Activated T-helper 2 cell treated with anti-CD3 and anti-CD28 coated beads, Interferon-gamma antibody, Interleukin-2, Interleukin-4, amounts not matched to agents 10 μg/mL and 5 μg/mL and 100 μg/mL, durations not matched to agents 14 hours and 24 hours and 36 hours (primary cell): ENCODE measurements at regions of chr4 and their contacts with region 1.

Region 1: DNA sequence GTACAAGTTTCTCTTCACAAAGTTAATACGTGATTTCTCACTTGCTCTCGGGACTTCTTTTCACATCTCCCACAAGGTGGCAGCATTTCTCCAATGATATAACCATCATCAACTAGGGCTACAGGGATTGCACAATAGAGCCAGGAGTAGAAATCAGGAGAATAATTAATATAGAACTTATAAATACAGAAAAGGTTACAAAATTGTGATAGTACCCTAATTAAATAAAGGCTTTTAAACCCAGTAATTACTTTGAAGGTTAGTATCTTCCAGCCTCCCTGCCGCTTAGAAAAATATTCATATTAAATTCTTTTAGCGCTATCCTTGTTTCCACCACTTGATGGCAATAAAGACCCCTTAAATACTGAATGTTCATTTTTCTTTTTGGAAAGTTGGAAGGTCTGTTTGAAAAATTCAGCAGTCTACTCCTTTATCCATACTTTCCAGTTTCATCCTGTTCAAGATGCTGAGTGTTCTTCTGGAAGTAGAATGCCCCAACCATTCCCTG is 65.8 kb downstream of the RASGEF1B start:
- DNase-seq: no peak
- H3K4me3 Mint-ChIP-seq: no peak overlapping the region
- H3K27ac Mint-ChIP-seq: no peak overlapping the region
- H3K4me1 Mint-ChIP-seq: peaks cover 3% of the 10 kb centered on the region
- H3K27me3 Mint-ChIP-seq: peaks cover 2% of the 10 kb centered on the region

Region 2: DNA sequence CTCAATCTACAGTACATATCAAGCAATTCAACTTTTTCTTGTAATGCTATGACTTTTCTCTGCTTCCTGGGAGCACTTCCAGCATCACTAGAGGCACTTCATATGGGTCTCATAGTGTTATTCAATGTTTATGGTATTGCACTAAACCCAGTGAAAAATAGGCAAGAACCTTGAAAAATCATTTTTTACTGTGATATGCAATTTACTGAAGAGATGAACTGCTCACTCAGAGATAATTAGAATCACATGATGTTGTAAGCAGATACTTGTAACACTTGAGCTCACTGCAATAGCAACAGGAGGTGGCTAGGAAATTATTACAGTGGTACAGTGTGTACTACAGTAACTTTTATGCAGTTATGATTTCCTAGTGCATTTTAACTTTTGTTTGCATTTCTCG is 27.6 kb before region 1 on chr4:
- intact Hi-C with region 1: no loop called
- DNase-seq: no peak
- H3K4me3 Mint-ChIP-seq: no peak overlapping the region
- H3K27ac Mint-ChIP-seq: no peak overlapping the region
- H3K4me1 Mint-ChIP-seq: no peaks in the 10 kb centered on the region
- H3K27me3 Mint-ChIP-seq: peaks cover 3% of the 10 kb centered on the region

Region 3: DNA sequence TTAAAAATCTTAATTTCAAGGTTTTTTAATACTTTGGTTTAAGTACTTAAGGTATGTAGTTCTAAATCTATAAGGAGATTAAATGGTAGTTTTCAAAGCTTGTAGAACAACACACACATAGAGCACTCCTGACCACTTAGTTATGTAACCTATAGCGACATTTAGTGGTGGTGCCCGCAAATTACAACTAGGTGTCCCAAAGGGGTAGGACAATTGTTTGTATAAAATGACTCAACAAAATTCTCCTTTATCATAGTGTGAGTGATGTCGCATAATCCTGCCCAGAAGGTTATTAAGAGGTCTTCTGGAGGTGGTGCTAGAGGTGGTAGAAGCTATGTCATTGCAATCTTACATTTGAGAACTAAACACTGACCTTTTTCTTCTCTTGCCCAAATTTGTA is 438.8 kb after region 1 on chr4:
- intact Hi-C with region 1: loop called (anchors 1 kb)
- DNase-seq: peak; percentile 44
- H3K4me3 Mint-ChIP-seq: no peak overlapping the region
- H3K27ac Mint-ChIP-seq: no peak overlapping the region
- H3K4me1 Mint-ChIP-seq: peaks cover 3% of the 10 kb centered on the region
- H3K27me3 Mint-ChIP-seq: peaks cover 4% of the 10 kb centered on the region

Region 4: DNA sequence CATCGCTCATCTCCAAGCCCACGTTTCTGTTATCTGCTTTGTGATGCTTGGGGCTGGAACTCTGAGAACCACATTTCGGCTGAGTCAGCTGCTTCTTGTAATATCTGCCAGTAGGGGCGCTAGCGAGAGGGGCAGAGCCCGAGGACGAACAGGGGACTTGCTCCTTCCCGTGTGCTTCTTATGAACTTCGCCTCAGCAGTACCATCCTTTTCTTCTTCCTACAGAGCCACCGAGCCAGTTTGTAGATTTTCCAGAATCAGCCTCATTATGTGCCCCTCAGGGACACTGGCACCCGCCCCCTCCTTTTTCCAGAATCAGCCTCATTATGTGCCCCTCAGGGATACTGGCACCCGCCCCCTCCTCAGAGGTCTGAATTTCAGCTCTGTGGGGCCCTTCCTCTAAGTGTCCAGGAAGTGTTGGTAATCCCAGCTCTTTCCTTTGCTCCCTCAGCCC is 507.5 kb after region 1 on chr4:
- intact Hi-C with region 1: loop called (anchors 10 kb)
- DNase-seq: peak; percentile 17
- H3K4me3 Mint-ChIP-seq: no peak overlapping the region
- H3K27ac Mint-ChIP-seq: no peak overlapping the region
- H3K4me1 Mint-ChIP-seq: peaks cover 4% of the 10 kb centered on the region
- H3K27me3 Mint-ChIP-seq: peaks cover 25% of the 10 kb centered on the region

Region 5: DNA sequence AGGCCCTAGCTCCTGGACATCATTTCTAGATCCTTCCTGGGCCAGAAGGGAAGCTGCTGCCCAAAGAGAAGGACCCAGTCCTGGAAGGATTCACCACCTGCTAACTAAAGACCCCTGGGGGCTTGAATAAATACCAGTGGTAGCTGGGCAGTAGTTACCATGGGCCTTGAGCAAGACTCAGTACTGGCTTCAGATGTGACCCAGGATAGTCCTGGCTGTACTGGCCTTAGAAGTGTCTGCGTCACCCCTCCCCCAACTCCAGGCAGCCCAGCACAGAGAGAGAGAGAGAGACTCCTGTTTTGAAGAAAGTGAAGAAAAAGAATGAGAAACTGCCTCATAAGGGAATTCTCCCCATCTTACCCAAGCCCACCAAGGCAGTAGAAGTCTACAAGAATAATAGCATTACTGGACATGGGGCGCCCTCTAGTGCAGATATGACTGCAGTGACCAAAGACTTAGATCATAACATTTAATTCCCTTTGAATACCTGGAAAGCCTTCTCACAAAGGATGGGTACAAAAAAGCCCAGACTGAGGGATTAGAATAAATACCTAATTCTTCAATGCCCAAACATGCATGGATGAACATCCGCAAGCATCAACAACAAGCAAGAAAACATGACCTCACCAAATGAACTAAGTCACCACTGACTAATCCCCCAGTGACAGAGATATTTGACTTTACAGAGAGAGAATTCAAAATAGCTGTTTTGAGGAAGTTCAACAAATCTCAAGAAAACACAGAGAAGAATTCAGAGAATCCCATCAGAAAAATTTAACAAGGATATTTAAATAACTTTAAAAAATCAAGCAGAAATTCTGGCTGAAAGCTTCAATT is 796.1 kb after region 1 on chr4:
- intact Hi-C with region 1: loop called (anchors 1 kb)
- DNase-seq: no peak
- H3K4me3 Mint-ChIP-seq: no peak overlapping the region
- H3K27ac Mint-ChIP-seq: no peak overlapping the region
- H3K4me1 Mint-ChIP-seq: peaks cover 3% of the 10 kb centered on the region
- H3K27me3 Mint-ChIP-seq: peaks cover 25% of the 10 kb centered on the region

Region 6: GRCh38 chr4:82268050-82268825 is 862.3 kb after region 1 on chr4:
- intact Hi-C with region 1: loop called (anchors 1 kb)
- DNase-seq: no peak
- H3K4me3 Mint-ChIP-seq: no peak overlapping the region
- H3K27ac Mint-ChIP-seq: no peak overlapping the region
- H3K4me1 Mint-ChIP-seq: peaks cover 8% of the 10 kb centered on the region
- H3K27me3 Mint-ChIP-seq: peaks cover 5% of the 10 kb centered on the region

Region 7: DNA sequence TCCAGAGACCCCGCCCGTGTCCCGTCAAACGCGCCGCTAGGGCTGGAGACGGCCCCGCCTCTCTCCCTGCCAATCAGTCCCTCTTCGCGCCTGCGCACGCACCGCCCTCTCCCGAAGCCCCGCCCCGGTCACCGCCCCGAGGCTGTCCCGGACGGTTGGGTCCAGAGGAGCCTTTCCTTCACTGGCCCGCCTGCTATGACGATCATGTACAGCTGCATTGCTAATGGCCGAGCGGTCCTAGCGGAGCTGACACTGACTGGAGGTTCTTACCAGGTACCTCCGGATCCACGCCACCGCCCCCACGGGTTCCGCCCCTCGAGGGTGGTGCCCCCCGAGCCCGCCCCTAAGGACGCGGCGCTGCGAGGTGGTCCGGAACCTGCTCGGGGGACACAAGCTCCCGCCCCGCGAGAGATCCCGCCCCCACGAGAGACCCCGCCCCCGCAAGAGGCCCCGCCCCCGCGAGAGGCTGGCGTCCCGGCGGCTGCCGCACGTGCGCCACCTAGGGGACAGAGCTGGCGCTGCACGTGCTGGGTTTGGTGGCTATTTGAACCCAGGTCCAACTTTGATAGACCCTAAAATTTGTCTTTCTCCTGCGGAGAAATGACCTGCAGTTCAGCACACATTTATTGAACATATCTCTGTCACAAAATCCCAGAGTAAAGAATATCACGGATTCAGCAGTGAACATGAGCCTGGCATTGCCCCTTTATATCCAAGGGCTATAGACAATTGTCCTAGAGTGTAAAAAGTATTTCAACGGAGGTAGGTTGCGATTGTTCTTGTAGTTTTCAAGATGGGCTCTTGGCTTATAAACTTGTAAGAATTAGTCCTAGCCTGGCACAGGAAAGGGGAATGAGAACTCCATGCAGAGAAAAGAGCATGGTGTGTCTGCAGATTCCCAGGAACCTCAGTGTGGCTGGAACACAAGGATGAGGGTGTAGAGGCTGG is 879.2 kb after region 1 on chr4:
- intact Hi-C with region 1: loop called (anchors 5 kb)
- DNase-seq: peak; percentile 99
- H3K4me3 Mint-ChIP-seq: peak overlapping the region; percentile 76
- H3K27ac Mint-ChIP-seq: no peak overlapping the region
- H3K4me1 Mint-ChIP-seq: peaks cover 12% of the 10 kb centered on the region
- H3K27me3 Mint-ChIP-seq: peaks cover 26% of the 10 kb centered on the region